Naive thymus-derived CD4-positive, alpha-beta T cell (primary cell): ENCODE measurements at regions of chr12 and their contacts with region 1.

Region 1: DNA sequence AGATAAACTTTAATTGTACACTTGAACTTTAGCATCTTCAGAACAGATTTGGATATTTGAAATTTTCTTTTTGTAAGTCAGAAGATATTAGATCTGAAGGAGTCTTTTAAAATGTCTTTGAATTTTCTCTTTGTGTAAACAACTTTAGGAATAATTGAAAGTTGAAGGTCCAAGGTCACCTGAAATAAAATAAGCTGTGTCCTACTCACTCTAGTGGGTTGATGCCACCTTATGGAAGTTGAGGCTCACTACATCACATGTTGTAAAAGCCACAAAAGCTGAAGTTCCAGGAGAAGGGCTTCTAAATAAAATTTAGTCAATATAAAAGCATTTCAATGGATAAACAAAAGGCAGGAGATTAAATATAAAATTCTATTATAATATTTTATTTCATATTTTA is 122.0 kb upstream of the ATXN7L3B start:
- DNase-seq: no peak
- ATAC-seq: no peak
- H3K4me3 ChIP-seq: no peak overlapping the region
- H3K4me3 Mint-ChIP-seq: no peak overlapping the region
- H3K27ac ChIP-seq: no peak overlapping the region
- H3K27ac Mint-ChIP-seq: no peak overlapping the region
- H3K4me1 ChIP-seq: no peaks in the 10 kb centered on the region
- H3K4me1 Mint-ChIP-seq: no peaks in the 10 kb centered on the region
- H3K27me3 ChIP-seq: no peaks in the 10 kb centered on the region
- H3K27me3 Mint-ChIP-seq: peaks cover 4 to 19% (median 11%) of the 10 kb centered on the region in 5 donors

Region 2: DNA sequence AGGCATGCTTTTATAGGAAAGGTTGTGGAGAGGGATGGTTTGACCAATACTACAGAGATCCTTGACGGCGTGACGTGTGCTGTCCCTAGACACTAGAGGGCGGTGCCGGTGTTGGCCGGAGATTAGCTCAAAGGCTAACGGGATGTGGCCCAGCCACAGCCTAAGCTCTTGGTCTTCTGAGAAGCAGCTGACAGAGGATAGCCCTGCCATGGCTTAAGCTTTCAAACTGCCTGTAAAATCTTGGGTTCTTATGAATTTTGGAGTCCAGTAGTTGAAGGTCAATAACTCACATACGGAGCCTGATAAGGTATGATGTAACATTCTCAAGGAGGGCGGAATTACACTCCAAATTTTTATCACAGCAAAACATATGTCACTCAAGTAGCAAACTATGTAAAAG is 393.7 kb before region 1 on chr12:
- CTCF ChIA-PET with region 1: no interaction called
- POLR2A ChIA-PET with region 1: no interaction called
- intact Hi-C with region 1: loop called in 1 of 2 experiments (anchors 10 kb)
- DNase-seq: no peak
- ATAC-seq: no peak
- H3K4me3 ChIP-seq: no peak overlapping the region
- H3K4me3 Mint-ChIP-seq: no peak overlapping the region
- H3K27ac ChIP-seq: no peak overlapping the region
- H3K27ac Mint-ChIP-seq: no peak overlapping the region
- H3K4me1 ChIP-seq: no peaks in the 10 kb centered on the region
- H3K4me1 Mint-ChIP-seq: no peaks in the 10 kb centered on the region
- H3K27me3 ChIP-seq: no peaks in the 10 kb centered on the region
- H3K27me3 Mint-ChIP-seq: no peaks in the 10 kb centered on the region

Region 3: DNA sequence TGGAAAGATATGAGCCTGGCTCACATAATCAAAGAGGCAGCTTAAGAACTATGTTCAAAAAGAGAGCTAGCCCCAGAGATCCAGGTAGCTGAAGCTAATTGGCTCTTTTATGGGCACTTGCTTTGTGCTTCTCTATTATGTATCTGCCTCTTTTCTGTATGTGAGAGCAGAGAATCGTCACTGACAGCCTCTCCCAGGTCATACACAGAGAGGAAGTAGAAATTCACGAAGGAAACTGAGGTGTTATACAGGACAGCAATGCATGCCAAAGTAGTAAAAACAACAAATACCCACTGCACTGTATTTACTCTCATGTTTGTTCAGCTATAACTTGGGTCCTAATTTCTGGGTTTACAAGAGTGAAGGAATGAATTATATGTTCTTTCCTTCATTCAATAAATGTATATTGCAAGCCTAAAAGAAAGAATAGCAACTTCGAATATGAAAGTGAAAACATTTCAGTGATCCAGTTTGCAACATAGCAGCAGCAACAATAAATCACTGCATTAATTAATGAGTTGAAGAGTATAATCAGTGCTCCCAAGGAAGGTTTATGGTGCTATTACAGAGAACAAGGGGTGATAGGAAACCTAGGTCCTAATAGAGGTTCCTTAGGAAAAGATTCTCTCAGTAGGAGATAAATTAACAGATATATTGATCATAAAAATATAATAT is 74.9 kb after region 1 on chr12:
- CTCF ChIA-PET with region 1: no interaction called
- POLR2A ChIA-PET with region 1: no interaction called
- intact Hi-C with region 1: no loop called
- DNase-seq: peak in 1 of 9 donors; percentile 8
- ATAC-seq: peak; percentile 67
- H3K4me3 ChIP-seq: peak overlapping the region; percentile 30
- H3K4me3 Mint-ChIP-seq: peak overlapping the region; percentile 35 to 78 (median 62)
- H3K27ac ChIP-seq: no peak overlapping the region
- H3K27ac Mint-ChIP-seq: peak overlapping the region in 2 of 9 donors; percentile 65 to 69
- H3K4me1 ChIP-seq: no peaks in the 10 kb centered on the region
- H3K4me1 Mint-ChIP-seq: peaks cover 0 to 24% (median 10%) of the 10 kb centered on the region in 7 donors
- H3K27me3 ChIP-seq: no peaks in the 10 kb centered on the region
- H3K27me3 Mint-ChIP-seq: peaks cover 0 to 16% (median 0%) of the 10 kb centered on the region in 5 donors